GM18951 (cell line): ENCODE measurements at regions of chr6 and their contacts with region 1.

Region 1: GRCh38 chr6:79954849-79955248 is 7.5 kb upstream of the ELOVL4 start:
- POLR2A ChIP-seq: no peak

Region 2: GRCh38 chr6:79438030-79438429 is 516.8 kb before region 1 on chr6:
- in situ Hi-C with region 1: no loop called
- POLR2A ChIP-seq: no peak

Region 3: GRCh38 chr6:79724816-79725215 is 230.0 kb before region 1 on chr6:
- in situ Hi-C with region 1: no loop called
- POLR2A ChIP-seq: no peak

Region 4: GRCh38 chr6:80088637-80089036 is 133.8 kb after region 1 on chr6:
- in situ Hi-C with region 1: loop called (anchors 10 kb)
- POLR2A ChIP-seq: no peak